ENCODE measurements at regions of chr7 and their contacts with region 1.

Region 1: DNA sequence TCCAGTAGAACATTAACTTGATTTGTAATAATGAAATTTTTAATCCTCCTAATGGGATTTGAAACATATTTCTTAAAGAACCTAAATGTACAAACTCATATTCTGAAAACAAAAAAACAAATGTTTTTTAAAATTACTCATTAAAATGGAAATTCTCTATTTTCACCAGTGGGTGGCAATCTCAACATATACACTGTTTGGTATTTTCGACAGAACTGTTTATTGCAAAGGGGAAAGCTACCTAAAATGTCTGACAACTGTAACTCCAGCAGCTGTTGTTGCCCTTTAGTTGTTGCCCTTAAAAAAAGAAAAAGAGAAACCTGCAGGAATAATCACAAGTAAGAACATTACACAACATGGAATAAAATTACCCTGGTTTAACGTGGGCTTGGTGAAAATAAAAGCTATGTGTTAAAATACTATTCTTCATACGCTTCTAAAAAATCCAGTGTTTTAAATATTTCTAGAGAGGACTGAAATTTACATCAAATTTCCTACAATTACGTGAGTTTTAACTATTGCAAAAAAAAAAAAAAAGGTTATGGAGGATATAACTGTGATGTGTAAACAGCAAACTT is 54.5 kb downstream of the COL1A2 start:
- DNase-seq: peak; percentile 26
- CTCF ChIP-seq: peak; percentile 44

Region 2: GRCh38 chr7:94436018-94436604 is 13.1 kb before region 1 on chr7:
- CTCF ChIA-PET with region 1: interaction called, 27 read pairs
- POLR2A ChIA-PET with region 1: no interaction called
- DNase-seq: peak; percentile 33
- CTCF ChIP-seq: peak; percentile 84

Region 3: DNA sequence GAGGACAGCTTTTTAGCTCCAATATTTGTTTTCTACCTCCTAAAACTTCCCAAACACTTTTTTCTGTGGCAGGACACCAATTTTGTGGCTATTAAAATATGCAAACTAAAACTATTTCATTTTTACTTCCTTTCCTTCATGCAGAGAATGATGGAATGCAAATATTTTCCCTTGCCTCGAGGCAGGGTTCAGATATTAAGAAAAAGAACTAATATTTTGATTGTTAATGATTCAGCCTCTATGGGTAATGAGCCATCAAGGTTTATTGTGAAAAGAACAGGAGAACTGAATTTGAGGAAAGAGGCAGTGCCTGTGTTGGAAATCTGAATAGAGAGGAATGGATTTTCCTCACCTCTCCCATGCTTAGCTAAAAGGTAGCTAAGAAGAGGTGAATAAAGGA is 17.3 kb after region 1 on chr7:
- CTCF ChIA-PET with region 1: interaction called, 12 read pairs
- POLR2A ChIA-PET with region 1: no interaction called
- DNase-seq: no peak
- CTCF ChIP-seq: no peak

Region 4: GRCh38 chr7:94657771-94658693 is 208.8 kb after region 1 on chr7:
- CTCF ChIA-PET with region 1: interaction called, 19 read pairs
- POLR2A ChIA-PET with region 1: interaction called, 4 read pairs
- DNase-seq: peak; percentile 82
- CTCF ChIP-seq: no peak

Region 5: DNA sequence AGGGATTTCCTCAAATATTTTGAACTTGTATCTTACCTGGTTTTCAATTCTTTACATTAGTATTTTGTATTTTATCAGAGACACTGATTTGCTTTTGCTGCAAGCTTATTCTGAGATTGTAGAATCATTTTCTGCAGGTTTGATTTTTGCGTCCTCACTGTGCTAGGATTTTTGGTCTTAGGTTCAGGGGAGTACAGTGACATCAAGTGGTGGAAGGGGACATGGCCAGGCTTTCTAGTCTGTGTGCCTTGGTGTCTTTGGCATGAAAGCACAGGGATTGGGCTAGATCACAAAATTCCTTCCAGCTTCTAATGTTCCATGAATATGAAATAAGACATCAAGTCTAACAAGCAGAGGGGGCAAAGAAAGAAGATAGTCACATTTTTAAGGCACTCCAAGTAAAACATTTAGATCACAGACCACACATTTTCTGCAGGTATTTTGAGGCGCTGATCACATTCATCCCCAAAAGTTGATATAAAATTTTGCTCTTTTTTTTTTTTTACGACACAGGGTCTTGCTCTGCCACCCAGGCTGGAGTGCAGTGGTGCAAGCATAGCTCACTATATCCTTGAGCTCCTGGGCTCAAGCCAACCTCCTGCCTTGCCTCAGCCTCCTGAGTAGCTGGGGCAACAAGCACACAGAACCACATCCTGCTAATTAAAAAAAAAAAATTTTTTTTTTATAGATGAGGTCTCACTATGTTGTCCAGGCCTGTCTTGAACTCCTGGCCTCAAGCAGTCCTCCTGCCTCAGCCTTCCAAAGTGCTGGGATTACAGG is 750.7 kb after region 1 on chr7:
- CTCF ChIA-PET with region 1: interaction called, 15 read pairs
- POLR2A ChIA-PET with region 1: no interaction called
- DNase-seq: peak; percentile 27
- CTCF ChIP-seq: peak; percentile 59

Region 6: GRCh38 chr7:95246831-95247370 is 797.7 kb after region 1 on chr7:
- CTCF ChIA-PET with region 1: interaction called, 20 read pairs
- POLR2A ChIA-PET with region 1: no interaction called
- DNase-seq: peak; percentile 17
- CTCF ChIP-seq: peak; percentile 65

Region 7: GRCh38 chr7:95476904-95477594 is 1027.8 kb after region 1 on chr7:
- CTCF ChIA-PET with region 1: interaction called, 32 read pairs
- POLR2A ChIA-PET with region 1: no interaction called
- DNase-seq: peak; percentile 37
- CTCF ChIP-seq: peak; percentile 76